ENCODE measurements at regions of chr15 and their contacts with region 1.

Region 1: DNA sequence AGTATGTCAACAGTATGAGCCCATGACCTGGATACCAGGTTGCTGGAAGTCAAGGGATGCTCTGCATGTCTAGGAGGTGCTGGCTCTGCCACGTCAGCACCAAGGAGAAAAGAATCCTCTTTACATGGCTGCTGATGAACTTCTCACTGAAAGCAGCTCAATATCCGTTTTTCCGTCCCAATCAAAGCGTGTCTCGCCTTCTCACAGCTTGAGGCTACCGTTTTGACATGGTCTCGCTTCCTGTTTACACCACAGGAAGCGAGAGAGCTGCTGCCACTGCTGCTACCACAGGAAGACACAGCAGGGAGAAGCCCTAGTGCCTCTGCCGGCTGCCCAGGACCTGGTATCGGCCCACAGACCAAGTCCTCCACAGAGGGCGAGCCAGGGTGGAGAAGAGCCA is 27.3 kb downstream of the STARD5 start:
- DNase-seq: peak; percentile 64 to 92
- ATAC-seq: peak; percentile 62 to 79 (median 77)
- H3K4me3 ChIP-seq: peak overlapping the region; percentile 72
- H3K4me3 Mint-ChIP-seq: peak overlapping the region; percentile 99
- H3K27ac ChIP-seq: peak overlapping the region; percentile 81
- H3K27ac Mint-ChIP-seq: peak overlapping the region; percentile 97 to 98
- H3K4me1 ChIP-seq: peaks cover 89% of the 10 kb centered on the region
- H3K4me1 Mint-ChIP-seq: peaks cover 93 to 100% of the 10 kb centered on the region in 2 donors
- H3K27me3 ChIP-seq: no peaks in the 10 kb centered on the region
- H3K27me3 Mint-ChIP-seq: no peaks in the 10 kb centered on the region
- CTCF ChIP-seq: no peak

Region 2: GRCh38 chr15:81315452-81316175 is 18.9 kb after region 1 on chr15:
- intact Hi-C with region 1: loop called (anchors 2 kb)
- DNase-seq: peak in 1 of 2 donors; percentile 53
- ATAC-seq: peak; percentile 51 to 72 (median 70)
- H3K4me3 ChIP-seq: no peak overlapping the region
- H3K4me3 Mint-ChIP-seq: peak overlapping the region; percentile 10
- H3K27ac ChIP-seq: peak overlapping the region; percentile 48
- H3K27ac Mint-ChIP-seq: peak overlapping the region; percentile 72 to 81
- H3K4me1 ChIP-seq: peaks cover 42% of the 10 kb centered on the region
- H3K4me1 Mint-ChIP-seq: peaks cover 37 to 54% of the 10 kb centered on the region in 2 donors
- H3K27me3 ChIP-seq: no peaks in the 10 kb centered on the region
- H3K27me3 Mint-ChIP-seq: no peaks in the 10 kb centered on the region
- CTCF ChIP-seq: no peak

Region 3: DNA sequence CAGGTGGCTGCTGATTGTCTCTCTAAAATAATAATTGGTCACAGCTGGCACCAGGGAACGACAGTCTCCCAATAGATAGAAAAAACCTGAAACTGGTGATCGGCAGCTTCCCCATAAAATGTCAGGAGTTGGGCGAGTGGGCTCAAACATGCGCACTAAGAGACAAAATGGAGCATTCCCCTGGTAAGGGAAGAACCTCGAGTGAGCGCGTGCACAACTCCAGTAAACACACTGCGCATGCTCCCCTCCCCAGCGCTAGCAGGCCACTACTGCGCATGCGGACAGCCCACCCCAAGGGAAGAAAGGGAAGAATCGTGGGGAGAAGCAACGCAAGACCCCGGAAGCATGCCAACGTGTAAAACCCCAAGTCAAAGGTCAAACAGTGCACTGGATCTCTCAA is 34.9 kb after region 1 on chr15:
- intact Hi-C with region 1: no loop called
- DNase-seq: no peak
- ATAC-seq: no peak
- H3K4me3 ChIP-seq: no peak overlapping the region
- H3K4me3 Mint-ChIP-seq: no peak overlapping the region
- H3K27ac ChIP-seq: no peak overlapping the region
- H3K27ac Mint-ChIP-seq: no peak overlapping the region
- H3K4me1 ChIP-seq: no peaks in the 10 kb centered on the region
- H3K4me1 Mint-ChIP-seq: no peaks in the 10 kb centered on the region
- H3K27me3 ChIP-seq: no peaks in the 10 kb centered on the region
- H3K27me3 Mint-ChIP-seq: no peaks in the 10 kb centered on the region
- CTCF ChIP-seq: no peak